Aorta (tissue), 5 donors: ENCODE measurements at regions of chr5 and their contacts with region 1.

Region 1: GRCh38 chr5:90709323-90710155 is 150.9 kb downstream of the ADGRV1 start:
- DNase-seq: no peak
- ATAC-seq: no peak
- H3K4me3 ChIP-seq: no peak overlapping the region
- H3K27ac ChIP-seq: no peak overlapping the region
- H3K4me1 ChIP-seq: no peaks in the 10 kb centered on the region
- H3K27me3 ChIP-seq: no peaks in the 10 kb centered on the region

Region 2: DNA sequence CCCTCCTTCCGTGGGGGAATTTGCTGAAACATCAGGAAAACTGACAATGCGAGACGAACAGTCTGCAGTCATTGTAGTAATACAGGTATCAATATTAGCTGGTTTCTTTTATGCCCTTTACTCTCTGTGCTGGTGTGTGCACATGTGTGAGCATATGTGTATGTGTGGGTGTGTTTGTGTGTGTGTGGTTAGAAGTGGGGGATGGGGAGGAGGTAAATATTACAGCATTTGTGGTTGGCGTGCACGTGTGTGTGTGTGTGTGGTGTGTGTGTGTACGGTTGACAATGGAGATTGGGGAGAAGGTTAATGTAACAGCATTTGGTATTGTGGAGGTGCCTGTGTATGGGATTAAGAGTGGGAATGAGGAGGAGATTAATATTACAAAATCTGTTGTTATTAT is 68.4 kb after region 1 on chr5:
- intact Hi-C with region 1: loop called in 1 of 2 experiments (anchors 10 kb)
- DNase-seq: no peak
- ATAC-seq: no peak
- H3K4me3 ChIP-seq: no peak overlapping the region
- H3K27ac ChIP-seq: no peak overlapping the region
- H3K4me1 ChIP-seq: no peaks in the 10 kb centered on the region
- H3K27me3 ChIP-seq: no peaks in the 10 kb centered on the region